Activated CD8-positive, alpha-beta T cell treated with anti-CD3 and anti-CD28 coated beads for 36 hours (primary cell): ENCODE measurements at regions of chr4 and their contacts with region 1.

Region 1: GRCh38 chr4:36351082-36351666 is 69.8 kb downstream of the DTHD1 start:
- DNase-seq: peak; percentile 91
- ATAC-seq: peak; percentile 65
- H3K4me3 Mint-ChIP-seq: no peak overlapping the region
- H3K27ac Mint-ChIP-seq: no peak overlapping the region
- H3K4me1 Mint-ChIP-seq: peaks cover 32% of the 10 kb centered on the region
- H3K27me3 Mint-ChIP-seq: no peaks in the 10 kb centered on the region
- CTCF ChIP-seq: peak; percentile 92

Region 2: DNA sequence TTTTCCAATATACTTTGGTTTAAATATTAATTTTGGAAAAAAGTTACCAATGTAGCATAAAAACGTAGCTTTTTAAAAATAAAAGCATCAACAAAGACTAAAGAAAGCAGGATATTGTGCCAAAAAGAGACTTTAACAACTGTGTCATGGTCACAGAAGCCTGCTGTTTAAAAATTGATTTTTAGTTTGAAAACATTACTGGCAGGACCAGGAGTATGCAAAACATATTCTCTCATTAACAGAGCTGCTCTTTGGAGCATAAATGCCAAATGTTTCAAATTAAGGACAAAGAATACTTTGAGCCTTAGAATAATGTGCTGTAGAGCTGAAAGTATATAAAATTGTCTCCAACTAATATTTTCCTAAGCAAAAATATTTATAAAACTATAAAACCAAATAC is 385.9 kb before region 1 on chr4:
- CTCF ChIA-PET with region 1: no interaction called
- POLR2A ChIA-PET with region 1: no interaction called
- intact Hi-C with region 1: no loop called
- DNase-seq: no peak
- ATAC-seq: no peak
- H3K4me3 Mint-ChIP-seq: no peak overlapping the region
- H3K27ac Mint-ChIP-seq: no peak overlapping the region
- H3K4me1 Mint-ChIP-seq: peaks cover 2% of the 10 kb centered on the region
- H3K27me3 Mint-ChIP-seq: no peaks in the 10 kb centered on the region
- CTCF ChIP-seq: no peak

Region 3: GRCh38 chr4:36394352-36394903 is 43.3 kb after region 1 on chr4:
- CTCF ChIA-PET with region 1: interaction called, 86 read pairs
- POLR2A ChIA-PET with region 1: interaction called, 5 read pairs
- intact Hi-C with region 1: loop called (anchors 1 kb)
- DNase-seq: peak; percentile 50
- ATAC-seq: peak; percentile 92
- H3K4me3 Mint-ChIP-seq: peak overlapping the region; percentile 55
- H3K27ac Mint-ChIP-seq: peak overlapping the region; percentile 95
- H3K4me1 Mint-ChIP-seq: peaks cover 10% of the 10 kb centered on the region
- H3K27me3 Mint-ChIP-seq: no peaks in the 10 kb centered on the region
- CTCF ChIP-seq: no peak

Region 4: GRCh38 chr4:36702245-36702644 is 351.1 kb after region 1 on chr4:
- CTCF ChIA-PET with region 1: no interaction called
- POLR2A ChIA-PET with region 1: no interaction called
- intact Hi-C with region 1: no loop called
- DNase-seq: no peak
- ATAC-seq: no peak
- H3K4me3 Mint-ChIP-seq: no peak overlapping the region
- H3K27ac Mint-ChIP-seq: no peak overlapping the region
- H3K4me1 Mint-ChIP-seq: no peaks in the 10 kb centered on the region
- H3K27me3 Mint-ChIP-seq: peaks cover 1% of the 10 kb centered on the region
- CTCF ChIP-seq: no peak